Activated CD4-positive, alpha-beta memory T cell treated with anti-CD3 and anti-CD28 coated beads for 36 hours (primary cell): ENCODE measurements at regions of chr9 and their contacts with region 1.

Region 1: GRCh38 chr9:107137495-107138202 is 145.4 kb upstream of the RAD23B start:
- DNase-seq: no peak
- H3K4me3 Mint-ChIP-seq: no peak overlapping the region
- H3K27ac Mint-ChIP-seq: no peak overlapping the region
- H3K4me1 Mint-ChIP-seq: no peaks in the 10 kb centered on the region
- H3K27me3 Mint-ChIP-seq: peaks cover 11% of the 10 kb centered on the region

Region 2: DNA sequence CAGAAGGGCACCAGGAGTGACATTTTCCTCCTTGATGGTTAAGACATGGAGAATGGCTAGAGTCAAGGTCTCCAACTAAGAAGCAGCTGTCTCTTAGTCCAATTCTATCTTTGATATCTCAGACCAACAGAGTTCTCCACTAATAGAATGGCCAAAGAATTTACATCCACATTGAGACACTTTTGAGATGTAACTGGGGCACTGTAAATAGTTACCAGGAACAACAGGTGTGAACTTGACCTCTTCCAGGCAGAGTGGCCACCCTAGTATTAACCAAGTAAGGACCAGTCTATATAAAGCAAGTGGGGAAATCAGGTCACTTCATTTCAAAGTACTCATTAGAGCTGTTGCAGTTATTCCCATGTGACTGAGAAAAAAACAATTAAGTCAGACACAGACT is 14.3 kb before region 1 on chr9:
- CTCF ChIA-PET with region 1: interaction called, 11 read pairs
- POLR2A ChIA-PET with region 1: no interaction called
- intact Hi-C with region 1: no loop called
- DNase-seq: no peak
- H3K4me3 Mint-ChIP-seq: no peak overlapping the region
- H3K27ac Mint-ChIP-seq: no peak overlapping the region
- H3K4me1 Mint-ChIP-seq: no peaks in the 10 kb centered on the region
- H3K27me3 Mint-ChIP-seq: peaks cover 3% of the 10 kb centered on the region